Adrenal gland (tissue), 19 donors: ENCODE measurements at regions of chr5 and their contacts with region 1.

Region 1: DNA sequence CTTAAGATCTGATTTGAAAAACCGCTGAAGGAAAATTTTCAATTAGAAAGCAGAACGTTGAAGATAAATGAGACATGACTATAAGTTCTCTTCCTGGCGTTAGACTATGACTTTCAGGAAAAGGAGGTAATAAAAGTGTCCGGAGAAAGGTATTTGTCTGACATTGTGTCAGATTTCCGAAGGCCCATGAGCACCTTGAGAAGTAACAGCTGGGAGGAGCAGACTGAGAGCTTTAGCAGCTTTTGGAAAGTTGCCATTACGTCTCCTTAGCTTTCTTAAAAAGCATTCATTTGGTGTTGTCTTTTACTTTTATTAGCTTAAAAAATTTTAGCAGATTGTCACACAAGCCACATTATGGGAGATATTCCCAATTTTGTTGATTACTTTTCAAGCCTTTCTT is 363.5 kb downstream of the NDUFS4 start:
- DNase-seq: no peak
- H3K4me3 ChIP-seq: no peak overlapping the region
- H3K27ac ChIP-seq: no peak overlapping the region
- H3K4me1 ChIP-seq: peaks cover 4 to 5% of the 10 kb centered on the region in 2 donors
- H3K27me3 ChIP-seq: no peaks in the 10 kb centered on the region
- CTCF ChIP-seq: no peak
- POLR2A ChIP-seq: no peak

Region 2: DNA sequence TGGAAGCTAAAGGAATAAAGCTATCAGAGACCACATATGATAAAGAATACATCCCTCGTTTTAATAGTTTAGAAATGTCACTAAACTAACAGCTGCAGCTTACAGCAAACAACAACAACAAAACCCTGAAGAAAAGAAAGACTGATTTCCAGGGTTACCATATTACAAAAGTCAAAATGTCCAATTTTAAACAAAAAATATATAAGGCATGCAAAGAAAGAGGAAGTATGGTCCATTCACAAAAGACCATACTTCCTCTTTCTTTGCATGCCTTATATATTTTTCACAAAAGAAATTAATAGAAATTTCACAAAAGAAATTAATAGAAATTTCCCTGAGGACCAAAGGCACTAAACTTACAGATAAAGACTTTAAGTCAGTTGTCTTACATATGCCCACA is 32.2 kb after region 1 on chr5:
- intact Hi-C with region 1: loop called in 1 of 2 experiments (anchors 5 kb)
- DNase-seq: no peak
- H3K4me3 ChIP-seq: no peak overlapping the region
- H3K27ac ChIP-seq: no peak overlapping the region
- H3K4me1 ChIP-seq: no peaks in the 10 kb centered on the region
- H3K27me3 ChIP-seq: no peaks in the 10 kb centered on the region
- CTCF ChIP-seq: no peak
- POLR2A ChIP-seq: no peak